ENCODE measurements at regions of chr12 and their contacts with region 1.

Region 1: DNA sequence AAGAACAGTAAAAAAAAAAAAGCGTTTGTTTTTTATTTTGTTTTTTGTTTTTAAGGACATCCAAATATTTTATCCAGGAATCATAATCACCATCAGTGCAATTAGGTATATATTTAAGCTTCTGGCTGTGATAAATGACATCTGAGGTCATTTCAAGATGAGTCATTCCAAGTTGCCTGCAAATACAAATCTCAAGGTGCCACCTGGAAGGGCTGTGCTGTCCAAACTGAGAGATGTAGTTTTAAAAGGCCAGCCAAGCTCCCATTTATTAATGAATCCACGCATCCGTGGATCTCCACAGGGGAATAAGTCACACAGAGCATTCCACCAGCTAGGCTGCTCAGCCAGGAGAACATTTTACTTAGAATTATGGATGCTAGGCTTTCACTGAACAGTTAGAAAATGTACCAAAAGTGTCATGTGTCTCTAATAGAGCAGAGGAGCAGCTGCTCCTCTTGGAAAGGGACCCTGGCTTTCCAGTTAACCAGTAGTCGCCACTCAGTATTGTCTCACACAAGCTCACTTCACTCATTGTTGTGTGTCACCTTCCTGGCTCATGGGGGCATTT is 1151.4 kb upstream of the TMEM132C start:
- DNase-seq: no peak
- ATAC-seq: no peak
- H3K4me3 ChIP-seq: no peak overlapping the region
- H3K27ac ChIP-seq: no peak overlapping the region
- H3K4me1 ChIP-seq: no peaks in the 10 kb centered on the region
- H3K27me3 ChIP-seq: no peaks in the 10 kb centered on the region
- CTCF ChIP-seq: no peak
- POLR2A ChIP-seq: no peak

Region 2: DNA sequence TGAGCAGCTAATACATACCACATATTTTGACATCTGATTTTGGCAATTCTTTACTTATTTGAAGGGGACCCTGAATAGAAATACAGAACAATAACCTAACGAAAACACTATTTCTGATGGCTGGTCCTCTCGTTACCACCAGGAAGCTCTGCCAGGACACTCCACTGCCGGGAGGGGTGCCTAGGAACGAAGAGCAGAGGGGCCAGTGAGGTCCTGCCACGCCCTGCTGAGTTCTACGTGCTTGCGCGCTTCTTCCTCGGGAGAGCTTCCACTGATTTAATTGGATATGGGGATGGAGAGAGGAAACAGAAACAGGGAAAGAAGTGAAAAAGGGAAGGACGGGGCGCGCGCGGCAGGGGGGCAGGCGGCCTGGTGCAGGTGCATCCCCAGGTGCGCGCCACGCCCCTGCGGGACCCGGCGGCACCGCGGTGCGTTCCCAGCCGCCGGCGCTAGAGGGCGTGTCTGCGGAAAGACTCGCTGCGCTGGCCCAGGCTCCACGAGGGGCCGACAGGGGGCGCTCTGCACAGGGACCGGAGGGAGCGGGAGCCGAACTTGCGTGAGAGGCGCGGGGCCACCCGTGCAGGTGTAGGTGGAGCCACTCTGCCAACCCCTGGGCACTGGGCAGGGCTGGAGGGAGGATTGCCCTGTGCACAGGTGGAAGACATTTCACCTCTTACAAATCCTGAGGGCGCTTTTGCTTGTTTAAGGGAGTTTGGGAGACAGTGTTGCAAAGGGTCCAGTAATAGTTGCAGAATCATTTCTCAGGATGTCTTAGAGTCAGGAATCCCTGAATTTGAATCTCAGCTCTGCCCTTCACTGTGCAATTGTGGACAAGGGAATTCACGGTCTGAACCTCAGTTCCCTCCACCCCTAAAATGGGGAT is 165.1 kb after region 1 on chr12:
- intact Hi-C with region 1: no loop called
- DNase-seq: peak; percentile 50 to 65 (median 56)
- ATAC-seq: peak; percentile 76 to 93 (median 86)
- H3K4me3 ChIP-seq: no peak overlapping the region
- H3K27ac ChIP-seq: no peak overlapping the region
- H3K4me1 ChIP-seq: no peaks in the 10 kb centered on the region
- H3K27me3 ChIP-seq: no peaks in the 10 kb centered on the region
- CTCF ChIP-seq: peak; percentile 76 to 99 (median 88)
- POLR2A ChIP-seq: no peak

Region 3: GRCh38 chr12:127306604-127307215 is 191.2 kb after region 1 on chr12:
- intact Hi-C with region 1: loop called in 1 of 2 experiments (anchors 10 kb)
- DNase-seq: no peak
- ATAC-seq: no peak
- H3K4me3 ChIP-seq: no peak overlapping the region
- H3K27ac ChIP-seq: no peak overlapping the region
- H3K4me1 ChIP-seq: no peaks in the 10 kb centered on the region
- H3K27me3 ChIP-seq: no peaks in the 10 kb centered on the region
- CTCF ChIP-seq: no peak
- POLR2A ChIP-seq: no peak